Gastrocnemius medialis (tissue), 4 donors: ENCODE measurements at regions of chr6 and their contacts with region 1.

Region 1: DNA sequence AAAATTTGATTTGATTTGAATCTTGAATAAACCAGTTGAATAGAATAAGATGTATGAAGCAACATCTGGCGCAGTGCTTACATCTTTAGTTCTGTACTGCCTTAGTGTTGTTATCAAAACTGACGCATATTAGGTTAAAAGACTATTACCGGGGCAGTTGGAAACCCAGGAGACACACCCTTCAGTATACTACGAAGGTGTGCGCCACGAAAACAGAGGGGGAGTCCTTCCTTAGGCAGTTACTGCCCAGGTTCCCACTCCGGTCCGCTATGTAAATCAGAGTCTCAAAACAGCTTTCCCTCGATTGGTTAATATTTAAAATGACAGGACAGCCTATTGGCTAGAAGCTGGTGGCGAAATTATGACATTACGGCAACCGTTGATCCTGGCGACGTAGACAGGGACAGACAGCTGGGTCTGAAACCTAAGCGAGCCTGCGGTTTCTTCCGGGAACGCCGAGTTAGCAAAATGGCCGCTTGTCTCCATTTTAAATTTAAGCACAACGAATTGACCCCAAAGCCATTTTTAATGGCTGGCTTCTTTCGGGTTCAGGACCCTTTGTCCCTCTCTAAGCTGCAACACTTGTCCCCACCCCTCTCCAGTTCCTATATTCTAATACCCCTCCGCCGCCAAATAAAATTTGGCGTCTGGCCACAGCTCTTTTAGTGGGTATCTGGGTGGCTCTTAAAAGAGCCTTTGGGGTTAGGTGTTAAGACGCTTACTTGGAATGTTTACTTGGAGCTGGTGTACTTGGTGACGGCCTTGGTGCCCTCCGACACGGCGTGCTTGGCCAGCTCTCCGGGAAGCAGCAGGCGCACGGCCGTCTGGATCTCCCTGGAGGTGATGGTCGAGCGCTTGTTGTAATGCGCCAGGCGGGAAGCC is 35.8 kb downstream of the HFE start:
- DNase-seq: peak; percentile 96 to 98
- ATAC-seq: peak; percentile 84 to 85
- H3K4me3 ChIP-seq: peak overlapping the region; percentile 77 to 96 (median 90)
- H3K27ac ChIP-seq: peak overlapping the region; percentile 94 to 98 (median 95)
- H3K4me1 ChIP-seq: peaks cover 18 to 26% of the 10 kb centered on the region in 2 donors
- H3K27me3 ChIP-seq: no peaks in the 10 kb centered on the region
- CTCF ChIP-seq: no peak
- POLR2A ChIP-seq: peak; percentile 43 to 47

Region 2: GRCh38 chr6:26045065-26045927 is 77.7 kb before region 1 on chr6:
- in situ Hi-C with region 1: loop called in 1 of 4 experiments (anchors 10 kb)
- intact Hi-C with region 1: no loop called
- DNase-seq: peak; percentile 72 to 84
- ATAC-seq: peak; percentile 69 to 71
- H3K4me3 ChIP-seq: peak overlapping the region; percentile 54 to 68 (median 62)
- H3K27ac ChIP-seq: peak overlapping the region; percentile 86 to 92 (median 88)
- H3K4me1 ChIP-seq: peaks cover 11 to 13% of the 10 kb centered on the region in 2 donors
- H3K27me3 ChIP-seq: peaks cover 0 to 36% (median 0%) of the 10 kb centered on the region in 3 donors
- CTCF ChIP-seq: no peak
- POLR2A ChIP-seq: peak; percentile 40 to 71

Region 3: GRCh38 chr6:26103770-26104456 is 19.1 kb before region 1 on chr6:
- in situ Hi-C with region 1: no loop called
- intact Hi-C with region 1: loop called (anchors 1 kb)
- DNase-seq: peak; percentile 76 to 87
- ATAC-seq: peak; percentile 98 to 99
- H3K4me3 ChIP-seq: peak overlapping the region; percentile 58 to 68 (median 63)
- H3K27ac ChIP-seq: peak overlapping the region; percentile 77 to 86 (median 84)
- H3K4me1 ChIP-seq: peaks cover 0 to 11% of the 10 kb centered on the region in 2 donors
- H3K27me3 ChIP-seq: no peaks in the 10 kb centered on the region
- CTCF ChIP-seq: peak; percentile 30 to 52 (median 40)
- POLR2A ChIP-seq: peak; percentile 86 to 88

Region 4: GRCh38 chr6:26175428-26176181 is 52.6 kb after region 1 on chr6:
- in situ Hi-C with region 1: no loop called
- intact Hi-C with region 1: loop called (anchors 5 kb)
- DNase-seq: no peak
- ATAC-seq: no peak
- H3K4me3 ChIP-seq: no peak overlapping the region
- H3K27ac ChIP-seq: no peak overlapping the region
- H3K4me1 ChIP-seq: peaks cover 4 to 6% of the 10 kb centered on the region in 2 donors
- H3K27me3 ChIP-seq: no peaks in the 10 kb centered on the region
- CTCF ChIP-seq: peak in 3 of 5 experiments; percentile 17 to 58 (median 51)
- POLR2A ChIP-seq: no peak

Region 5: DNA sequence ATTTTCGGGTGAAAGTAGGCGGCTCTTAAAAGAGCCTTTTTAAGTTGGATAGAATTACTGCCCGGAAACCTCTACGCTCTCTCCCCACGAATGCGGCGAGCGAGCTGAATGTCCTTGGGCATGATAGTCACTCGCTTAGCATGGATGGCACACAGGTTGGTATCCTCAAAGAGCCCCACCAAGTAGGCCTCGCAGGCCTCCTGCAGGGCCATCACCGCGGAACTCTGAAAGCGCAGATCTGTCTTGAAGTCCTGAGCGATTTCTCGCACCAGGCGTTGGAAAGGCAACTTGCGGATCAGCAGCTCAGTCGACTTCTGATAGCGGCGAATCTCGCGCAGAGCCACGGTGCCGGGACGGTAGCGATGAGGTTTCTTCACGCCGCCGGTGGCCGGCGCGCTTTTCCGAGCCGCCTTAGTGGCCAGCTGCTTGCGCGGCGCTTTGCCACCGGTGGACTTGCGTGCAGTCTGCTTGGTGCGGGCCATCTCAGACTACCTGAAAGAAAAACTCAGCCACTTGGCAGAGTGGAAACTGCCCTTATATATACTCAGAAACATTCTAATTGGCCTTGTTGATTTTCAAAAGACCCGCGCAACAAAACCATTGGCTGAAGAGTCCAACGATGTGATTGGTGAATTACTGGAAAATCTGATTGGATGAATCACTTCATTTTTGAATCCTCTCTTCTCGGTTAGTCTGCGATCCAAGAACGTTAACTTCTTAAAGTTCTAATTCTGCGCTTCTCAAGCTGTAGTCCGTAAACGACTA is 148.1 kb after region 1 on chr6:
- in situ Hi-C with region 1: no loop called
- intact Hi-C with region 1: no loop called
- DNase-seq: peak in 1 of 2 donors; percentile 45
- ATAC-seq: peak; percentile 55 to 66
- H3K4me3 ChIP-seq: peak overlapping the region; percentile 2 to 54 (median 40)
- H3K27ac ChIP-seq: peak overlapping the region in 3 of 4 donors; percentile 44 to 48 (median 45)
- H3K4me1 ChIP-seq: peaks cover 5 to 6% of the 10 kb centered on the region in 2 donors
- H3K27me3 ChIP-seq: peaks cover 66 to 71% (median 68%) of the 10 kb centered on the region in 3 donors
- CTCF ChIP-seq: no peak
- POLR2A ChIP-seq: no peak

Region 6: GRCh38 chr6:26537846-26538571 is 415.0 kb after region 1 on chr6 and contains the start of gene HMGN4:
- in situ Hi-C with region 1: no loop called
- intact Hi-C with region 1: loop called (anchors 10 kb)
- DNase-seq: peak; percentile 58 to 72
- ATAC-seq: peak; percentile 68 to 85
- H3K4me3 ChIP-seq: peak within 1 kb of the TSS; percentile 75 to 89 (median 89)
- H3K27ac ChIP-seq: peak within 1 kb of the TSS; percentile 89 to 95 (median 92)
- H3K4me1 ChIP-seq: peaks cover 39 to 41% of the 10 kb centered on the region in 2 donors
- H3K27me3 ChIP-seq: no peaks in the 10 kb centered on the region
- CTCF ChIP-seq: no peak
- POLR2A ChIP-seq: peak; percentile 47 to 62
- total RNA-seq, gene HMGN4: 20.1 to 58.7 (median 28.4) TPM